ENCODE measurements at regions of chr17 and their contacts with region 1.

Region 1: DNA sequence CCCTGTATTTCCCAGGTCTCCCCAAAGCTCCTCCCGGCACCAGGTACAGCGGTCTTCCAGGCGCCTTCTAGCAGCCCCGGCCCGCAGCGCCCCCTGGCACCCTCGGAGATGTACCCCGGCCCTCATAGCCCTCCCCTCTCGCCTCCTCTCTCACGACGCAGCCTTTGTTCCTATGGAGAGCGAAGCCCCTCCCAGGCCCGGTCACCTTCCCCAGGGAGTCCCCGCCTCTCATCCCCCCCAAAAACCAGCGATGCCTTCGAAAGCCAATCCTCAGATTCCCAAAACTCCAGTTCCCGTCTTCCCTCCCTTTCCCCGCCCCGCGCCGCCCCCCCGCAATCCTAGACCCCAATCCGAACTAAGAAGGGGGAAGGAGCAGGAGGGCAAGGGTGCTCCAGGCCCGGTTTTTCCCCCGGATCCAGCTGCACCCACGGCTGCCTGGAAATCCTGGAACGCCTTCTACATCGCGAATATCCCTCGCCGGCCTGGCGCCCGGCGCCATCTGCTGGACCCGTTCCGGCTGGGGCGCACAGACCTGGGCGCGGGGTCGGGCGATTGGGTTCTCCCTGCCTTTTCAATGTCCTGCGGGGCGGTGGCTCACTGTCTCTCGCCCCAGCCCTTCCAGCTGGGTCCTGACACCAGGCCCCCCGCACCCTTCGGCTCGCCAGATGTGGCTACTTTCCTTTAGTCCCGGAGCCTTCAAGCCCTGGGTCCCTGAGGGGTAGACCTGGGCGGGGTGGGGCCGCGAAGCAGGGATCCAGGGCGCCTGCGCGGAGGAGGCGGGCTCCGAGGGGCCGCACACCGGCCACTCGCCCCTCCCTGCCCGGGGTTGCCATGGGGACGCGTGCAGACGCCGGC is at the start of gene DNAH2:
- DNase-seq: peak; percentile 91
- H3K4me3 ChIP-seq: peak within 1 kb of the TSS; percentile 71 to 78 (median 75)
- H3K27ac ChIP-seq: peak within 1 kb of the TSS; percentile 13
- H3K4me1 ChIP-seq: peaks cover 8% of the 10 kb centered on the region
- H3K27me3 ChIP-seq: peaks cover 3% of the 10 kb centered on the region
- CTCF ChIP-seq: peak in 1 of 2 donors; percentile 73
- total RNA-seq, gene DNAH2: 1.8 to 2.7 TPM

Region 2: DNA sequence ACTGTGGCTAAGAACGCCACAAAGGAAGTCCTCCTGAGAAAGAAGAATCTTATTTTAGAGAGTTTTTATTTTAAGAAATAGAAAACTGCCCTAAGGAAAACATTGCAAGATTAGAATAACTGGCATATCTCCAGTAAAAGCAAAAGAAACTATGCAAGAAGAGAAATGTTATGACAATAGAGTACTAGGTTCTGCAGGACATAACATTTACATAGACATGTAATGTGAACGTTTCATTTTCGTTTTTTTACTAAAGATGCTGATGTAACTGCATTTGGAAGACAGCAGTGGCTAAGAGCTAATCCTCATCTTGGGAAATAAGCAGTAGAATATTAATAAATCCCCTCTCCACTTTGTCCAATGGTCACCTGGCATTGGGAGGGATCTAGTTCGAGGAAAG is 594.7 kb before region 1 on chr17:
- CTCF ChIA-PET with region 1: no interaction called
- dilution Hi-C with region 1: no loop called
- in situ Hi-C with region 1: no loop called
- intact Hi-C with region 1: no loop called
- DNase-seq: no peak
- H3K4me3 ChIP-seq: no peak overlapping the region
- H3K27ac ChIP-seq: no peak overlapping the region
- H3K4me1 ChIP-seq: no peaks in the 10 kb centered on the region
- H3K27me3 ChIP-seq: peaks cover 7% of the 10 kb centered on the region
- CTCF ChIP-seq: no peak

Region 3: DNA sequence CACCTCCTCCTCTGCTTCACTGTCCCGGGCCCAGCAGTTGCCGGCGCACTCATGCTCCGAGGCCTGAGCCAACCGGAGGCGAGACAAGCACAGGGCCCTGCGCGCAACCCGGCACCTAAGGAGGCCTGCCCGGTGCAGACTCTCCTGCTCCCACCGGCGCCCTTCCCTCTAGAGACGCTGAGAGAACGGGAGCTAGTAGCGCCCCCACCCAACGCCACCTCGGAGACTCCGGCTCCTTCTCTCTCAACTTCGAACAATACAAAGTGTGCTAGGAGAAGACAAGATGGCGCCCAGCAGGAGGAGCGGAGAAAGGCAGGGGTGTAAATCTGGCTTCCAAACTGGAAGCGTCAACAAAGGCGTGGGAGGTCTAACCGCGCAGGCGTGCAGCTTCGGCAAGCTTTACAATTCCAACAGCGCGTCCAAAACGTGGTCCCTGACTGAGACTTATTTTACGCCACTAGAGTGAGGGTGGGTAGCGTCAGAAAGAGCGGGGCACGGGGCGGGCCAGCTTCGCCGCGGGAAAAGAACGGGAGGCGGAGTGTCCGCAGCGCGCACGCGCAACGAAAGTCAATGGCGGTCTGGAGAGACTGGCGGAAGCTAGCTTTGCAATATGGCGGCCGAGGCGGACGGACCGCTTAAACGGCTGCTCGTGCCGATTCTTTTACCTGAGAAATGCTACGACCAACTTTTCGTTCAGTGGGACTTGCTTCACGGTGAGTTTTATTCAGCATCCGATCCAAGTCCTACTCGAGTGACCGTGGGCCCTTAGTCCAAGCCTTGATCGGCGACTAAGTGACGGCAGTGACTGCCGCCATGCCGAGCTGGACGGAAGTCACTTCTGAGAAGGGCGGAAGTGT is 133.6 kb before region 1 on chr17 and contains the start of gene MPDU1:
- CTCF ChIA-PET with region 1: interaction called, 18 read pairs
- dilution Hi-C with region 1: no loop called
- in situ Hi-C with region 1: no loop called
- intact Hi-C with region 1: no loop called
- DNase-seq: peak; percentile 95
- H3K4me3 ChIP-seq: peak within 1 kb of the TSS; percentile 42 to 63 (median 50)
- H3K27ac ChIP-seq: peak within 1 kb of the TSS; percentile 86
- H3K4me1 ChIP-seq: peaks cover 66% of the 10 kb centered on the region
- H3K27me3 ChIP-seq: no peaks in the 10 kb centered on the region
- CTCF ChIP-seq: no peak
- total RNA-seq, gene MPDU1: 44.8 to 51.2 TPM

Region 4: GRCh38 chr17:7632492-7632894 is 84.6 kb before region 1 on chr17:
- CTCF ChIA-PET with region 1: interaction called, 13 read pairs
- dilution Hi-C with region 1: no loop called
- in situ Hi-C with region 1: no loop called
- intact Hi-C with region 1: loop called (anchors 1 kb)
- DNase-seq: peak; percentile 39
- H3K4me3 ChIP-seq: no peak overlapping the region
- H3K27ac ChIP-seq: no peak overlapping the region
- H3K4me1 ChIP-seq: peaks cover 2% of the 10 kb centered on the region
- H3K27me3 ChIP-seq: no peaks in the 10 kb centered on the region
- CTCF ChIP-seq: peak; percentile 61 to 77

Region 5: GRCh38 chr17:7703584-7704479 is 13.3 kb before region 1 on chr17:
- CTCF ChIA-PET with region 1: no interaction called
- dilution Hi-C with region 1: no loop called
- in situ Hi-C with region 1: no loop called
- intact Hi-C with region 1: loop called (anchors 1 kb)
- DNase-seq: peak; percentile 32
- H3K4me3 ChIP-seq: no peak overlapping the region
- H3K27ac ChIP-seq: no peak overlapping the region
- H3K4me1 ChIP-seq: peaks cover 12% of the 10 kb centered on the region
- H3K27me3 ChIP-seq: no peaks in the 10 kb centered on the region
- CTCF ChIP-seq: no peak

Region 6: GRCh38 chr17:7834962-7835813 is 118.1 kb after region 1 on chr17:
- CTCF ChIA-PET with region 1: no interaction called
- dilution Hi-C with region 1: no loop called
- in situ Hi-C with region 1: no loop called
- intact Hi-C with region 1: loop called (anchors 1 kb)
- DNase-seq: peak; percentile 98
- H3K4me3 ChIP-seq: peak overlapping the region; percentile 69 to 94 (median 76)
- H3K27ac ChIP-seq: peak overlapping the region; percentile 97
- H3K4me1 ChIP-seq: peaks cover 43% of the 10 kb centered on the region
- H3K27me3 ChIP-seq: no peaks in the 10 kb centered on the region
- CTCF ChIP-seq: peak; percentile 52 to 90

Region 7: DNA sequence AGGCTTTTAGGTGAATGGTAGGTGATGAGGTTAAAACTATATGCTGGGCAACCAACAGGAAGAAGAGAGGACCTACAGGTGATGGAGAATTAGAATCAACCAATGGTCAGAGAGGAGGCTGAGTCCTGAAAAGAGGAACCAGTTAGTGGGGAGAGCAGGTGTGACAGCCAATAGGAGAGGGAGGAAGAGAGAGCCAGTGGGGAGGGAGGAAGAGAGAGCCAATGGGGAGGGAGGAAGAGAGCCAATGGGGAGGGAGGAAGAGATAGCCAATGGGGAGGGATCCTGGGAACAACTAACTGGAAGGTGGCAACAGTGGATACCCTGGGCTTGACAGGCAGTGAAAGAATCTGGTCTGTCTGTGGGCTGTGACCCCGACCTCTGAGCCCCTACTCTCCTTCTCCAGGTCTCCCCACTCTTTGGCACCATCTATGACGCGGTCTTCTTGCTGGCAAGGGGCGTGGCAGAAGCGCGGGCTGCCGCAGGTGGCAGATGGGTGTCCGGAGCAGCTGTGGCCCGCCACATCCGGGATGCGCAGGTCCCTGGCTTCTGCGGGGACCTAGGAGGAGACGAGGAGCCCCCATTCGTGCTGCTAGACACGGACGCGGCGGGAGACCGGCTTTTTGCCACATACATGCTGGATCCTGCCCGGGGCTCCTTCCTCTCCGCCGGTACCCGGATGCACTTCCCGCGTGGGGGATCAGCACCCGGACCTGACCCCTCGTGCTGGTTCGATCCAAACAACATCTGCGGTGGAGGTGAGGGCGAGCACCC is 289.0 kb after region 1 on chr17:
- CTCF ChIA-PET with region 1: interaction called, 33 read pairs
- dilution Hi-C with region 1: no loop called
- in situ Hi-C with region 1: no loop called
- intact Hi-C with region 1: no loop called
- DNase-seq: no peak
- H3K4me3 ChIP-seq: no peak overlapping the region
- H3K27ac ChIP-seq: no peak overlapping the region
- H3K4me1 ChIP-seq: peaks cover 17% of the 10 kb centered on the region
- H3K27me3 ChIP-seq: no peaks in the 10 kb centered on the region
- CTCF ChIP-seq: no peak